ENCODE measurements at regions of chr19 and their contacts with region 1.

Region 1: DNA sequence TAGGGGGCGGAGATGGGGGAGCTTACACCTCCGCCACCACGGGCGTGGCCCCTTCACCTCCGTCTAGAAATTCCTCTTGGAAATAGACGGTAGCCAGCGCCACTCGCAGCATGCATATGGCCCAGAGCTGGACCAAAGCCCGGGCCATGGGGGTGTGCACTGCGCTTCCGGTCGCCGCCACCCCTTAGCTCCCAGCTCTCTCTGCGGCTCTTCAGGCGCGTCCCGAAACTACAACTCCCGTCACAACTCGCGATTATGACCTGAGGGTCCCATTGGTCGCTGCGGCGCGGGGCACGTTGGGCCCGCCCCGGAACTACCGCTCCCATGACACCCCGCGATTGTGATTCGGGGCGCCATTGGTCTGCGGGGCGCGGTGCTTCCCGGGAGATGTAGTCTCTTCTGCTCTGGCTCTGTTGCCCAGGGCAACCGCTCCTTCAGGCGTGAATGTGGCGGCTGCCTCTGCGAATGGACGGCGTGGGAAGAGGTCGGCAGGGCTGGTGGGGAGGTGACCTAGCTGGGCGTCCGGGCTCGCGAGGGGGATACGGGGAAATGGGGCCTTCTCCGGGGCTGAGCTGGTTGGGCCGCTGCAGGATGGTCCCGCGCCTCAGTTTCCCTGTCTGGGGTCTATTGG is at the starts of genes C19orf44 and CALR3:
- DNase-seq: peak; percentile 99 to 100 (median 99)
- ATAC-seq: peak; percentile 98 to 99 (median 99)
- H3K4me3 ChIP-seq: peak within 1 kb of the TSS; percentile 53 to 85 (median 72)
- H3K27ac ChIP-seq: peak within 1 kb of the TSS in 11 of 12 donors; percentile 54 to 83 (median 81)
- H3K4me1 ChIP-seq: peaks cover 0 to 18% (median 5%) of the 10 kb centered on the region in 12 donors
- H3K27me3 ChIP-seq: no peaks in the 10 kb centered on the region
- CTCF ChIP-seq: peak in 6 of 12 donors; percentile 14 to 52 (median 40)
- POLR2A ChIP-seq: peak in 1 of 2 donors; percentile 59
- total RNA-seq, gene C19orf44: 1.6 to 4.8 (median 3.3) TPM
- total RNA-seq, gene CALR3: not detected

Region 2: DNA sequence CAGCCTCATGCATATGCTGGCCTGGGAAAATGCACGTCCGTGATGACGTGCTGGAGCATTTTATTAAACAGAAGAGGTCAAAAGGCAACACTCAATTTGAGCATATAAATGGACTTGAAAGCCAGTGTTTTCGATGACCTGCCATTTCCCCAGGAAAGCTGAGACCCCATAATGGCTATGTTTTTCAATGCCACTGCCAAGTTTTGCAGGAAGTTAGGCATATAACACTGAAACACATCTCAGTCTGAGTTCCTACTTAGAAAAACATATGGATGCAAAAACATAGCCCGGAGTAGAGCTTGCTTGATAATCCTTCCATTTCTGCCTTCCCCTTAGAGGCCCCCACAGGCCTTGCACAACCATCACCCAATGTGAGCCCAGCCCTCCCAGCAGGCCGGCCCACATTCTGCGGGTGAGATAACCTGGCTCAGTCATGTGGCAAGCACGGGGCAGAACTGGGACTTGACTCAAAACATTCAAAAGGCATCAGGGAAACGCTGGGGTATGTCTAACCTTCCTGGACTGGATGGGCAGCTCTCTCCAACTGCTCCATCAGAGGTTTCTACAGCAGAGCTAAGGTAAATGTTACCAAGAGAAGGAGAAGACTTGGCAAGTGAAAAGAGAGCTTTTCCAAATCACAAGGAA is 49.3 kb before region 1 on chr19:
- intact Hi-C with region 1: loop called in 1 of 10 experiments (anchors 10 kb)
- DNase-seq: peak; percentile 78 to 90 (median 82)
- ATAC-seq: peak; percentile 89 to 95 (median 92)
- H3K4me3 ChIP-seq: no peak overlapping the region
- H3K27ac ChIP-seq: peak overlapping the region; percentile 58 to 89 (median 74)
- H3K4me1 ChIP-seq: peaks cover 15 to 84% (median 60%) of the 10 kb centered on the region in 12 donors
- H3K27me3 ChIP-seq: no peaks in the 10 kb centered on the region
- CTCF ChIP-seq: no peak
- POLR2A ChIP-seq: peak in 1 of 2 donors; percentile 60

Measured in heart left ventricle (tissue), 16 donors.